Activated T-helper 2 cell treated with anti-CD3 and anti-CD28 coated beads, Interferon-gamma antibody, Interleukin-2, Interleukin-4, amounts not matched to agents 10 μg/mL and 5 μg/mL and 100 μg/mL, durations not matched to agents 14 hours and 24 hours and 36 hours (primary cell): ENCODE measurements at regions of chr6 and their contacts with region 1.

Region 1: DNA sequence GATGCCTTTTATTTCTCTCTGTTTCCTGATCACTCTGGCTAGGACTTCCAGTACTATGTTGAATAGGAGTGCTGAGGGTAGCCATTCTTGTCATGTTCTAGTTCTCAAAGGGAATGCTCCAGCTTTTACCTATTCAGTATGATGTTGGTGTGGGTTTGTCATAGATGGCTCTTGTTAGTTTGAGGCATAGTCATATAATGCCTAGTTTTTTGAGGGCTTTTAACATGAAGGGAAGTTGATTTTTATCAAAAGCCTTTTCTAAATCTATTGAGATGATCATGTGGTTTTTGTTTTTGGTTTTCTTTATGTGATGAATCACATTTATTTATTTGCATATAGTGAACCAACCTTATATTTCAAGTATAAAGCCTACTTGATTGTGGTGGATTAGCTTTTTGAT is 55.6 kb downstream of the KLHL32 start:
- DNase-seq: no peak
- H3K4me3 Mint-ChIP-seq: no peak overlapping the region
- H3K27ac Mint-ChIP-seq: no peak overlapping the region
- H3K4me1 Mint-ChIP-seq: peaks cover 8% of the 10 kb centered on the region
- H3K27me3 Mint-ChIP-seq: no peaks in the 10 kb centered on the region

Region 2: GRCh38 chr6:96345501-96345900 is 634.6 kb before region 1 on chr6:
- intact Hi-C with region 1: no loop called
- DNase-seq: no peak
- H3K4me3 Mint-ChIP-seq: no peak overlapping the region
- H3K27ac Mint-ChIP-seq: no peak overlapping the region
- H3K4me1 Mint-ChIP-seq: no peaks in the 10 kb centered on the region
- H3K27me3 Mint-ChIP-seq: peaks cover 3% of the 10 kb centered on the region

Region 3: DNA sequence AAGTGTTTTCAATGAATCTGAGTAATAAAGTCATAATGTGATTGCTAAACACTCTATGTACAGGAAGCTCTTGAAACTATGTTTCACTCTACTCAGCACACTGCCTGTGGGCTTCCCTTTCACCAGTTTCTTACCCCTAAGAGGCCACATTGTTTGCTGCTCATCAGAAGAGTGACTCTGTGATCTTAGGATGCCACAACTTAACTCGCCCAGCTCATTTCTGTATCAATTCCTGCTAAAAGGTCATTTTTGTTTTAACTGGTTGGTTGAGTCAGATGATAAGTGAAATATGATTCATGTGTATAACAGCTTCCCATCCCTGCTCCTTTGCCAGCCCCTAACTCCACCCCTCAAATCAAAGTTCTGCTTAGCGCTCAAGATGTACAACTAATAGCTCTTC is 72.6 kb before region 1 on chr6:
- intact Hi-C with region 1: loop called (anchors 5 kb)
- DNase-seq: no peak
- H3K4me3 Mint-ChIP-seq: no peak overlapping the region
- H3K27ac Mint-ChIP-seq: no peak overlapping the region
- H3K4me1 Mint-ChIP-seq: peaks cover 24% of the 10 kb centered on the region
- H3K27me3 Mint-ChIP-seq: peaks cover 4% of the 10 kb centered on the region

Region 4: GRCh38 chr6:97023982-97024381 is 43.8 kb after region 1 on chr6:
- intact Hi-C with region 1: no loop called
- DNase-seq: no peak
- H3K4me3 Mint-ChIP-seq: no peak overlapping the region
- H3K27ac Mint-ChIP-seq: no peak overlapping the region
- H3K4me1 Mint-ChIP-seq: no peaks in the 10 kb centered on the region
- H3K27me3 Mint-ChIP-seq: peaks cover 2% of the 10 kb centered on the region